A549 (cell line): ENCODE measurements at regions of chr14 and their contacts with region 1.

Region 1: DNA sequence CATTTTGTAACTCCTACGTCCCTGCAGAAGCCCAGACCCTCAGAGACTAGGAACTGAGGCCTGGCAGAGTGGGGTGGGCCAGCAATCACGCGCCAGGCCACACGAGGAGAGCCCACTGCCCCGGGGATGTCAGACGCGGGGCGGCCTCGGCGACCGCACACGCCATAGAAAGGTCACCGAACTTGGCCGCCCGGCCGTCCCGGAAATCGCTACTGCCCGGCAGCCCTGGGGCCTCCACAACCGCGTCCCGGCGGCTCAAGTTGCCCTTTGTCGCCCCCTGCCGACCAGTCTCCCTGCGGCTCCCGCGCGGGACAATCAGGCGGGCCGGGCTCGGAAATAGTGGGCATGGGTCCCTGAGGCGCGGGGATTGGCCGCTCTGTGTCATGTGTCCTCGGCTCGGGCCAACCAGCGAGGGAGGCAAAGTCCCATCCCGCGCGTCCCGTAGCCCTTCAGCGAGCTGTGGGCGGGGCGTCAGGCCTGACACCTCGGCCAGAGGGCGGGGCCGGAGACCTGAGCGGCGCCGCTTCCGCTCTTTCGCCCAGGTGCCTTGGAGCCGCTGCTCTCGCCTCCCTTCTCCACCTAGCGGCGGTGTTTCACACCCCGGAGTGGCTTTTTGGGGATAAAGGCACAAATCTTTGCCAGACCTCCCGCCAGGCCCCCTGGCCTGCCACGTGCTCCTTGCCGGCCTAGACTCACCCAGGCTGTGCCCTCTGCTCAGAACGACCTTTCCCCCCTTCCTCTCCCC is 33.4 kb upstream of the DEGS2 start:
- DNase-seq: peak; percentile 99
- ATAC-seq: peak; percentile 99 to 100
- H3K4me3 ChIP-seq: peak overlapping the region; percentile 33
- H3K27ac ChIP-seq: peak overlapping the region; percentile 85 to 92
- H3K4me1 ChIP-seq: peaks cover 15% of the 10 kb centered on the region
- CTCF ChIP-seq: peak; percentile 84
- EP300 ChIP-seq: no peak
- POLR2A ChIP-seq: peak; percentile 39
- RAD21 ChIP-seq: peak; percentile 83 to 94

Region 2: GRCh38 chr14:100114109-100114765 is 78.6 kb before region 1 on chr14:
- CTCF ChIA-PET with region 1: interaction called, 32 read pairs
- POLR2A ChIA-PET with region 1: no interaction called
- DNase-seq: no peak
- ATAC-seq: no peak; a peak in 1 of 6 replicates
- H3K4me3 ChIP-seq: no peak overlapping the region
- H3K27ac ChIP-seq: no peak overlapping the region
- H3K4me1 ChIP-seq: no peaks in the 10 kb centered on the region
- CTCF ChIP-seq: no peak
- EP300 ChIP-seq: no peak
- POLR2A ChIP-seq: no peak
- RAD21 ChIP-seq: no peak

Region 3: GRCh38 chr14:100155042-100155846 is 37.6 kb before region 1 on chr14:
- CTCF ChIA-PET with region 1: interaction called, 23 read pairs
- POLR2A ChIA-PET with region 1: interaction called, 4 read pairs
- DNase-seq: peak; percentile 62 to 70
- ATAC-seq: peak in 1 of 2 experiments; percentile 60; a peak in 3 of 6 replicates
- H3K4me3 ChIP-seq: no peak overlapping the region
- H3K27ac ChIP-seq: peak overlapping the region; percentile 40 to 52; a peak in 3 of 6 replicates
- H3K4me1 ChIP-seq: peaks cover 20% of the 10 kb centered on the region
- CTCF ChIP-seq: peak; percentile 31
- EP300 ChIP-seq: no peak
- POLR2A ChIP-seq: no peak
- RAD21 ChIP-seq: peak; percentile 11 to 38; a peak in 1 of 5 replicates

Region 4: GRCh38 chr14:100178691-100179090 is 14.2 kb before region 1 on chr14:
- CTCF ChIA-PET with region 1: interaction called, 21 read pairs
- POLR2A ChIA-PET with region 1: interaction called, 4 read pairs
- DNase-seq: no peak
- ATAC-seq: no peak
- H3K4me3 ChIP-seq: no peak overlapping the region
- H3K27ac ChIP-seq: no peak overlapping the region; a peak in 2 of 6 replicates
- H3K4me1 ChIP-seq: peaks cover 13% of the 10 kb centered on the region; the same call in 2 of the 3 replicates
- CTCF ChIP-seq: no peak
- EP300 ChIP-seq: no peak
- POLR2A ChIP-seq: no peak
- RAD21 ChIP-seq: no peak

Region 5: DNA sequence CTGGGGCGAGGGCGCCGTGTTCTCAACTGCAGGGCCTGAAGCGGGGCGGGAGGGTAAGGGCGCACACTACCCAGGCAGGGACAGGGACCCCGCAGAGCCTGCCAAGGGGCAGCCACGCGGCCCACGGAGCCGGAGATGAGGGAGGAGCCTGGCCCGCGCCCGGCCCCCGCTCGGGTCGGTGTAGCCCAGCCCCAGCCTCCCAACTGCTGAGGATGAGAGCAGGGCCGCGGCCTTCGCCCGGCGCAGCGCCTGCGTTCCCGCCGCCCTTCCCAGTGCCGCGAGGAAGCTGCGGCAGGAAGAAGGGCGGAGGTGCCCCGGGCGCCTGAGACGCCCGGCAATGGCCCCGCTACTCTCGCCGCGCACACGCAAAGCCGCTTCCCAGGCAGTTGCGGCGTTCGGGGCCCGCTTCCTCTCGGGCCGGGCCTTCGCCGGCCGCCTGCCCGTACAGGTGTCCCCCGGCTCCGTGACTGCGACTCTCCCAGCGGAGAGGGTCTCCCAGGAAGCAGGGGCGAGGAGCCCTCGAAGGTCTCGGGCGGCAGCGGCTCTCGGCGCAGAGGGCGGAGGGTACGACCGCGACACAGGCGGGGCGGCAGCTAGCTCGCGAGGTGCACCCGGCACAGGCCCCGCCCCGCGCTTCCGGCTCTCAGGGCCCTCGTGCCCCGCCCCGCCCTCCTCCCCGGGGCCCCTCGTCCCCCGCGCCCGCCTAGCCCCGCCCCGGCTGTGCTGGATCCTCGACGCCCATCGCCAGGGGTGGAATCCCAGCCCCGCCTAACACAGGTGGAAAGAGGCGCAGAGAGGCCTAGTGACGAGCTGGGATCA is 21.3 kb after region 1 on chr14:
- CTCF ChIA-PET with region 1: interaction called, 21 read pairs
- POLR2A ChIA-PET with region 1: interaction called, 11 read pairs
- DNase-seq: peak; percentile 86 to 87
- ATAC-seq: peak; percentile 96 to 97
- H3K4me3 ChIP-seq: peak overlapping the region; percentile 93
- H3K27ac ChIP-seq: peak overlapping the region; percentile 96 to 98
- H3K4me1 ChIP-seq: peaks cover 16% of the 10 kb centered on the region
- CTCF ChIP-seq: no peak
- EP300 ChIP-seq: no peak
- POLR2A ChIP-seq: peak; percentile 87
- RAD21 ChIP-seq: peak in 1 of 2 experiments; percentile 29; a peak in 1 of 5 replicates

Region 6: DNA sequence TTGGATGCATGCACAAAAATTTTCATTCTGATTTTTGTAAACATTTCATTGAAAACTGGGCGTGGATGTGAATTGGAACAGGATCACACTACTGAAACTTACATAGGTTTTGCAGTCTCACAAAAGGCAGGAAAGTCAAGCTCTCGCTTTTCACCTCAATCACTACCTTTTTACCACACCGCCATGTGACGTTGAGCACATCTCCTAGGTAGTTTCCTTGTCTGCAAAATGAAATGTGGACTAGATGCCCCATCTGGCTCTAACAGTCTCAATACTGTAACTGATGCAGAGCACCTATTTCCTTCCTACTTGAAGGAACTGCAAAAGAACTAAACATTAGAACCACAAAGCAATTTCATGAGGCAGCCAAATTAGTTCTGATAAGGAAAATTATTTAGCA is 41.7 kb after region 1 on chr14:
- CTCF ChIA-PET with region 1: interaction called, 15 read pairs
- POLR2A ChIA-PET with region 1: interaction called, 4 read pairs
- DNase-seq: no peak
- ATAC-seq: no peak
- H3K4me3 ChIP-seq: no peak overlapping the region
- H3K27ac ChIP-seq: no peak overlapping the region
- H3K4me1 ChIP-seq: peaks cover 13% of the 10 kb centered on the region; the same call in 2 of the 3 replicates
- CTCF ChIP-seq: no peak
- EP300 ChIP-seq: no peak
- POLR2A ChIP-seq: no peak
- RAD21 ChIP-seq: no peak